Activated naive CD4-positive, alpha-beta T cell treated with anti-CD3 and anti-CD28 coated beads, Interleukin-2, amount 10 ng/mL, durations not matched to agents 7 days and 5 days (primary cell): ENCODE measurements at regions of chr2 and their contacts with region 1.

Region 1: DNA sequence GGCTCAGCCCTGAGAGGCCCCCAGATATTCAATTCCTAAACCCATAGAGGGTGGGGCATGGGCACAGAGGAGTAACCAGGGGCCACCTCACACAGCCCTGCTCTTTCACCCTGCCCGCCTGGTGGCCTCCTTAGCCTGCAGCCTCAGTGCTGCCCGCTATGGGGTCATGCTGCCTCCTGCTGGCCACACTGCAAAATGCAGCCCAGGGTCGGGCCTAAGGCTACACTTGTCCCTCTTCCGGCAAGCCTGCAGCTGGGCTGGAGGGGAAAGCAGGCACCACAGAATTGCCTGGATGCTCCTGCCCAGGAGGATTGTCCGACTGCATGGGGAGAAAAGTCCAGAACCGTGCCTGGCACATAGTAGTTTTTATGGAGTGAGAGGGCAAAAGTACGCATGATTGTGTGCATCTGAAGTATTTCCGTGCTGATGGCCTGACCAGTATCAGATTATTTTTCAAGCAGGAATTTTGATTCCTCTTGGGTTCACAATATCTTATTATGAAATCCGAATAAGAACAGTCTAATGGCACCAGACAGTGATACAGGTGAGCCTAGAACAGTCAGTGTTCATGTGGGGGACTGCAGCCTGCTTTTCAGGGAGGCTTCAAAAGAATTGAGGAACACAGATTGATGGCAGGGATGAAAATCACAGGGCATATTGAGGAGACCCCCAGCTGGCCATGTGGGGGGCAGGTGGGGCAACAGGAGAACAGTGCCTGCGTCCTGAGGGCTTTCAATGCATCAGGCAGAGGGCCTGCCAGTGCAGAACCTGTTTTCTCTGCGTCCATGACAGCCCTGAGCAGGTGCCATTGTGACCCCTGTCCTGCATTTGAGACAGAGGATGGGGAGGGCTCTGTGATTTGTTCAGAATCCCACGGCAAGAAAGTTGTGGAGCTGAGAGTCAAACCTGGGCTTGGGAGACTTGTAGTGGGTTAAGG is 51.2 kb upstream of the ALPP start:
- DNase-seq: peak; percentile 91
- H3K4me3 Mint-ChIP-seq: no peak overlapping the region
- H3K27ac Mint-ChIP-seq: peak overlapping the region; percentile 28
- H3K4me1 Mint-ChIP-seq: peaks cover 12% of the 10 kb centered on the region
- H3K27me3 Mint-ChIP-seq: no peaks in the 10 kb centered on the region

Region 2: DNA sequence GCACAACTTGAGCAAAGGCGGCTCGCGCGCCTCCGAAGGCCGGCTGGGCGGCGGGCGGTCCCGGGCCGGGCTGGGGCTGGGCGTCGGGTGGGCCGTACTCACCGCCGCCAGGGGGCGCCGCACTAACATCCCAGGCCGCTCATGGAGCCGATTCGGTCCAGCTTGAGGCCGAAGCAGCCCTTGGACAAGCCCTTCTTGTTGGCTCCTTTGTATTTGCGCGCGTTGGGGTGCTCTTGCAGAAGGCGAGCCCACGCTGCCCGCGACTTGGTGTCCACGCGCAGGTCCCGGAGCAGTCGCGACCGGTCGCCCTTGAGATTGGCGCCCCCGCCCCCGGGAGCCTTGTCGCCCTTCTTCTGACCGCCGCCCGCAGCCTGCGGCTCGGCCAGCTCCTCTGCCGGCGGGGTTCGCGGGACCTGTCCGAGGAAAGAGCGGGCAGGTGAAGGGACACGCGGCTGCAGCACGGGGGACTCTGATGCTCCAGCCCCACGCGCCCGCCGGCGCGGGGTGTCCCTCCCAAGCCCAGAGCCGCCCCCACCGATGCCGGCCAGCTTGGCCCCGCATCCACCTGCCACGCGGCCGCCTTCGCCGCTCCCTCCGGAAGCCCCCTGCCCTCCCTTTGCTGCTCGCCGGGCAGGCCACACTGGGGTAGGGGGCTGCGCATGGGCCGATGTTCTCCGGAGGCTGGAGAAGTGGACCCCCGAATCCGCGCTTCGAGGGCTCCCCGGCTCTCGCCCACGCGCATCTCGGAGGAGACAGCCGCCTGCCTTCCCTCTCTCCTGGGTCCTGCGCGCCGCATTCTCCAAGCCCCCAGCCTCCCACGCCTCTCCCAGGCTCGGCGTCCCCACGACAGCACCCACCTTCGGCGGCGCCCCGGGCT is 401.8 kb before region 1 on chr2:
- CTCF ChIA-PET with region 1: interaction called, 40 read pairs
- DNase-seq: peak; percentile 75
- H3K4me3 Mint-ChIP-seq: peak overlapping the region; percentile 54
- H3K27ac Mint-ChIP-seq: no peak overlapping the region
- H3K4me1 Mint-ChIP-seq: peaks cover 16% of the 10 kb centered on the region
- H3K27me3 Mint-ChIP-seq: peaks cover 85% of the 10 kb centered on the region

Region 3: GRCh38 chr2:232292395-232293154 is 34.8 kb before region 1 on chr2:
- CTCF ChIA-PET with region 1: interaction called, 14 read pairs
- DNase-seq: peak; percentile 75
- H3K4me3 Mint-ChIP-seq: no peak overlapping the region
- H3K27ac Mint-ChIP-seq: no peak overlapping the region
- H3K4me1 Mint-ChIP-seq: peaks cover 11% of the 10 kb centered on the region
- H3K27me3 Mint-ChIP-seq: no peaks in the 10 kb centered on the region

Region 4: DNA sequence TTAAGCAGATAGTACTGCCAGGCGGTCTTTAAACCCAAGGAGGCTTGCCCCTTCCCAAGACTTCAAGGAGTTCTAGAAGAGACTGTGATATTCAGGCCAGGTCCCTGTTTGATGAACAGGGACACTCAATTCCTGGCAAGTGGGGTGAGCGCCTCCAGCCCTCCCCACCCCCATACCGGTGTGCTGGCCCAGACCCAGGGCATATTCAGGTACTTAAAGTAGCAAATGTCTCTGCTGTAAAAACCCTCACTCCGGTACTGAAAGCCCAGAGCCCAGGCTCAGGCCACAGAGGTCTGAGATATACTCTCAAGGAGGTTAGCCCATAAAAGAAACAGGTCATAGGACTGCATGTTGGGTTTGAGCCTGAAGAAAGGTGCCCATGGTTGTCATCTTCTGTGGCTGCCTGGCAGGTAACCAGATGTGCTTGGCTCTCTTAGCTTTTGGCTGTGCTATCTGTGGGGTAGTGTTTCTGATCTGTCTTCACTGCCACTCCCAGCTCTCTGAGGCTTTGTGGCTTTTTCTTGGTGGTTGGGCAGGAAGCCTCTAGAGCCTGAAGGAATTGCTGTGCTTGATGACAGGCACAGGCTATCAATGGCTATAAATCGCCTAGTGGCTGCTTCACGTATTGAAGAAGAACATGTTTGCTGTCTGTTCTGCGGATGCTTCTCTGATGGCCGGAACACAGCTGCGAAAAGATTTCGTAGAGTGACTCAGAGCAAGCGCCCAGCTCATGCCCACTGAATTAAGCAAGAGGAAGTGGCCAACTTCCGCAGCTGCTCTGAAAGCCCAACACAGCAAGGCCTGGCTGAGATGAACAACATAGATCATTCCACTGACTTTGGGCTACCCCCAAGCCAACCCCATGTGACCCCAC is 12.1 kb before region 1 on chr2:
- CTCF ChIA-PET with region 1: interaction called, 19 read pairs
- DNase-seq: peak; percentile 88
- H3K4me3 Mint-ChIP-seq: peak overlapping the region; percentile 47
- H3K27ac Mint-ChIP-seq: peak overlapping the region; percentile 96
- H3K4me1 Mint-ChIP-seq: peaks cover 92% of the 10 kb centered on the region
- H3K27me3 Mint-ChIP-seq: no peaks in the 10 kb centered on the region